Psoas muscle (tissue), 8 donors: ENCODE measurements at regions of chr5 and their contacts with region 1.

Region 1: DNA sequence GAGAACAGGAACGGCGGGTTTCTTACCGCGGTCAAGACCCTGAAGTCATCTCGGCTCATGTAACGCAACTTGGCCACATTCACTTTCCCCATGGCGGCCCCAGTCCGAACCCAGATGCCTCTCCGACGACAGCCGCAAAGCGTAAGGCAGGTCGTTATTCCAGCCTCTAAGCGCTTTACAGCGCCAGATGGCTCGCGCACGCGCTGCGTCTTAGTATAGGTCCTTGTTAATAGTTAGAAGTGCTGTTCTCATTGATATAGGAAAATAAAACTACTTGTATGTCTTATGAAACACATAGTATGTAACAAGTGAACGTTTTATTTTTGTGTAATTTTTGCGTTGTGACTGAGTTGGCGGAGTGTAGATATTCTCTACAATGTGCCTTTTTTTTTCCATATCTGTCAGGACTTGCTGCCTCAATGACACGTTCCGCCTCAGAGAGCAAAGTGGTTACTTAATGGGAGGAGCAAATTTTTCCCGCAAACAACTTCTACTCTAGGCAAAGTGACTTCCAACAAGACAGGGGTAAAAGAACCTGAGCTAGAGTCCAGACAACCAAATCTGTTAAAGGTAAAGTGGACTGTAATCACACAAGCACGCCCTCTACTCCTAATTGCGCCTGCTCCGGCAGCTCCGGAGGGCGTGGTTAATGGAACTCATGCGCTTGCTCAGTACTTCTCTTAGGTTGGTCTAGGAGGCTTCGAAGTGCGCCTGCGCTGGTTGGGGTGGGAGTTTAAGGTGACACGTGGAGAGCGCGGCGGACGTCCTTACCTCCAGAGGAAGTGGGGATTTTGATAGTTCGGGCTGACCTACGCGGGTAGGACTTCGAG is at the start of gene RIOK2:
- DNase-seq: peak; percentile 94 to 96
- ATAC-seq: peak; percentile 94 to 97 (median 96)
- H3K4me3 ChIP-seq: peak within 1 kb of the TSS; percentile 72
- H3K27ac ChIP-seq: peak within 1 kb of the TSS; percentile 94
- H3K4me1 ChIP-seq: peaks cover 29% of the 10 kb centered on the region
- H3K27me3 ChIP-seq: no peaks in the 10 kb centered on the region
- CTCF ChIP-seq: no peak
- total RNA-seq, gene RIOK2: 17.4 to 30.4 (median 21.0) TPM

Region 2: GRCh38 chr5:97377582-97377981 is 194.3 kb after region 1 on chr5:
- intact Hi-C with region 1: no loop called
- DNase-seq: no peak
- ATAC-seq: no peak
- H3K4me3 ChIP-seq: no peak overlapping the region
- H3K27ac ChIP-seq: no peak overlapping the region
- H3K4me1 ChIP-seq: no peaks in the 10 kb centered on the region
- H3K27me3 ChIP-seq: no peaks in the 10 kb centered on the region
- CTCF ChIP-seq: no peak

Region 3: GRCh38 chr5:98796197-98796972 is 1613.1 kb after region 1 on chr5:
- intact Hi-C with region 1: loop called in 1 of 2 experiments (anchors 10 kb)
- DNase-seq: no peak
- ATAC-seq: peak; percentile 56 to 81 (median 68)
- H3K4me3 ChIP-seq: no peak overlapping the region
- H3K27ac ChIP-seq: no peak overlapping the region
- H3K4me1 ChIP-seq: peaks cover 26% of the 10 kb centered on the region
- H3K27me3 ChIP-seq: no peaks in the 10 kb centered on the region
- CTCF ChIP-seq: peak; percentile 80